Dendritic cell treated with granulocyte-macrophage colony-stimulating factor and Interleukin-4, amounts not matched to agents 40 ng/mL and 50 ng/mL, for 4 days (primary cell): ENCODE measurements at regions of chr2 and their contacts with region 1.

Region 1: DNA sequence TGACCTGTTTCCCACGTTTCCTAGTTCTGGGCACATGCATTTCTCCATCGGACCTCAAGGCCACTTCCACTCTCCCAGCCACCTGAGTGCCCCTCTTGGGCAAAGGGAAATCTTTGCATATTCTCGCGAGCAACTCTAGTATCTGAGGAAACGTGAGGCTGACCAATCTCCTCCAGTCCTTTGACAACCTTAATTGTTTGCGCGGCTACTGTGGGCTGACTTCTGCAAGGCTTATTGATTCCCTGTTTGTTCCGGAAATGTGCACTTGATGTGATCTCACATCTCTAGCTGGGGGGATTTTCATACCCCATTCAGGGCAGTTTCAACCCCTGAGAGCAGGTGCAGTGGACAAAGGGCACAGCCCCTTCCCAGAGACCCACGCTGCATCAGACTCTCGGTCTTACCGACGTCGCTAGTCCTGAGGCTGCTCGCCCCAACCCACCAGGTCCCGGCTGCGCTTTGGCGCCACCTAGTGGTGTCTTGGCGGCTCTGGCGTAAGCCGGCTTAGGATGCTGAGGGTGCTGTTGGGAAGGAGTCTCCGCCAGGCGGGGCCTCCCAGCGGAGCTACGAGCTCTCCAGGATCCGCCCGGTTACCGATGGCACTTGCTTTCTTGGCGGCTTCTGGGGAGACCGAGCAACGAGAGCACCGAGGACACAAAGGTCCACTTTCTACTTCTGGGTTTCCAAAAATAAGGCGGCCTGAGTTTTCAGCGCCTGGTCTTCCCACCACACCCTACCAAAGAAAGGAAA is 24.8 kb upstream of the SPR start:
- H3K4me3 Mint-ChIP-seq: peak overlapping the region; percentile 39
- H3K27ac Mint-ChIP-seq: no peak overlapping the region
- H3K4me1 Mint-ChIP-seq: peaks cover 10% of the 10 kb centered on the region
- H3K27me3 Mint-ChIP-seq: peaks cover 45% of the 10 kb centered on the region

Region 2: DNA sequence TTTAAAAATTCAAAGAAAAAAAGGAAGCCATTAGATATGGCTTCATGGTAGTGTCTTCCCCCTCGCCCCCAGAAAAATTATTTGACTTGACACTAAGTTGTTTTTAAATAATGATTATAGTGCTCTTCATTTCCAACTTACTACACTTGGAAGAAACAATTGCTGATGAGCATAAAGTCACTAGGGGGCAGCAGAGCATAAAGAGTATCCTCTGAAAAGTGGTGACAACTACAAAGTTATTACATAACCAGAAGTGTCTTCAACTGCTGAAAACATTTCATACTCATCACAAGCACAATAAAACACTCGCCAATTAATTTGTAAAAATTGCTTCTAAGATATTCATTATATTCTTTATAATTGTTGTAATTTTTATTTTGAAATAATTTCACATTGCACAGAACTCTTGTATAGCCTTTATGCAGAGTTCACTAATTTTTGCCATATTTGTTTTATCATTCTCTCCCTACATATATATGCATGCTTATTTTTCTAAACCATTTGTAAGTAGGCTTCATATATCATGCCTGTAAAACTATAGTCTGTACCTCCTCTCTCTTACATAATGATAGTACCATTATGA is 91.4 kb before region 1 on chr2:
- intact Hi-C with region 1: loop called (anchors 1 kb)
- H3K4me3 Mint-ChIP-seq: no peak overlapping the region
- H3K27ac Mint-ChIP-seq: no peak overlapping the region
- H3K4me1 Mint-ChIP-seq: no peaks in the 10 kb centered on the region
- H3K27me3 Mint-ChIP-seq: no peaks in the 10 kb centered on the region

Region 3: GRCh38 chr2:72803151-72803550 is 59.3 kb before region 1 on chr2:
- intact Hi-C with region 1: no loop called
- H3K4me3 Mint-ChIP-seq: no peak overlapping the region
- H3K27ac Mint-ChIP-seq: no peak overlapping the region
- H3K4me1 Mint-ChIP-seq: no peaks in the 10 kb centered on the region
- H3K27me3 Mint-ChIP-seq: peaks cover 3% of the 10 kb centered on the region